Activated naive CD4-positive, alpha-beta T cell treated with anti-CD3 and anti-CD28 coated beads for 36 hours (primary cell): ENCODE measurements at regions of chr4 and their contacts with region 1.

Region 1: DNA sequence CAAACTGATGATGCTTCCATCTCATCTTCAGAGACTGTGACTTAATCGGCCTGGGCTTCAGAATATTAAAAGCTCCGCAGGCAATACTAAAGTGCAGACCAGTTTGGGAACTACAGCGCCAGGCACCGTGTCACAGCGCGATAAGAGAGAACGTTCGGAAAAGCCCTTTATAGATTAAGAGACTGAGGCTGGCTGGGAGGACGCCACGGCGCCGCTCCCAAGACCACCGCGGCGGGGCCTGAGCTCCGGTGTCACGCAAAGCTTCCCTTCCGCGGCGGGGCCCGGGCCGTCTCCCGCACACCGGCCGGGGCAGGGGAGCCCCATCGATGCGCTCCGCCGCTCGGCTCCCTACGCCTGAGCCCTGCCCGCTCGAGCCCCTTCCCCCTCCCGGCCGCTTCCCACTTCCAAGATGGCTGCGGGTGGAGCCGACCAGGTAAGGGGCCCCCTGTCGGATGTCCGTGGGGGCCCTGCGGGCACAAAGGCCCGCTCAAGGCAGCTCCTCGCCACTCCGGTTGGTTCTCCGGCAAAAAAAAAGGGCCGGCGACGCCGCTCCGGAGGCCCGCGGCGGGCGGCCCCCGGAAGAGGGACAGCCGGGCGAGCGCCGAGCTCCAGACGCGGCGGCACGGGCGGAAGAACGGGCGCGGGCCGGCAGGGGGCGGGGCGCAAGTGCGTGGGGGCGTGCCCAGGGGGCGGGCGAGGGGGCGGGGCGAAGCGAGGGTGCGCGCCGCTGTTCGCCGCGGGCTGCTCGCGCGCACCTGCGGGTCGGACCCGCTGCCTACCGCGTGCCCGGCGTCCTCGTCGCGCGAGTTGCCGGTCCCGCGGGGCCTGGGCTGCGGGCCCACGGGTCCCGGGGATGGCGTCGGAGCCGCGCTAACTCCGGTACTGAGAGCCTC is at the start of gene TBC1D14:
- DNase-seq: peak; percentile 88
- H3K4me3 Mint-ChIP-seq: peak within 1 kb of the TSS; percentile 92
- H3K27ac Mint-ChIP-seq: peak within 1 kb of the TSS; percentile 86
- H3K4me1 Mint-ChIP-seq: peaks cover 45% of the 10 kb centered on the region
- H3K27me3 Mint-ChIP-seq: peaks cover 3% of the 10 kb centered on the region
- total RNA-seq, gene TBC1D14: 23.6 to 24.6 TPM

Region 2: GRCh38 chr4:6898763-6899162 is 10.6 kb before region 1 on chr4:
- CTCF ChIA-PET with region 1: interaction called, 13 read pairs
- intact Hi-C with region 1: loop called (anchors 1 kb)
- DNase-seq: no peak
- H3K4me3 Mint-ChIP-seq: no peak overlapping the region
- H3K27ac Mint-ChIP-seq: peak overlapping the region; percentile 69
- H3K4me1 Mint-ChIP-seq: peaks cover 20% of the 10 kb centered on the region
- H3K27me3 Mint-ChIP-seq: no peaks in the 10 kb centered on the region

Region 3: DNA sequence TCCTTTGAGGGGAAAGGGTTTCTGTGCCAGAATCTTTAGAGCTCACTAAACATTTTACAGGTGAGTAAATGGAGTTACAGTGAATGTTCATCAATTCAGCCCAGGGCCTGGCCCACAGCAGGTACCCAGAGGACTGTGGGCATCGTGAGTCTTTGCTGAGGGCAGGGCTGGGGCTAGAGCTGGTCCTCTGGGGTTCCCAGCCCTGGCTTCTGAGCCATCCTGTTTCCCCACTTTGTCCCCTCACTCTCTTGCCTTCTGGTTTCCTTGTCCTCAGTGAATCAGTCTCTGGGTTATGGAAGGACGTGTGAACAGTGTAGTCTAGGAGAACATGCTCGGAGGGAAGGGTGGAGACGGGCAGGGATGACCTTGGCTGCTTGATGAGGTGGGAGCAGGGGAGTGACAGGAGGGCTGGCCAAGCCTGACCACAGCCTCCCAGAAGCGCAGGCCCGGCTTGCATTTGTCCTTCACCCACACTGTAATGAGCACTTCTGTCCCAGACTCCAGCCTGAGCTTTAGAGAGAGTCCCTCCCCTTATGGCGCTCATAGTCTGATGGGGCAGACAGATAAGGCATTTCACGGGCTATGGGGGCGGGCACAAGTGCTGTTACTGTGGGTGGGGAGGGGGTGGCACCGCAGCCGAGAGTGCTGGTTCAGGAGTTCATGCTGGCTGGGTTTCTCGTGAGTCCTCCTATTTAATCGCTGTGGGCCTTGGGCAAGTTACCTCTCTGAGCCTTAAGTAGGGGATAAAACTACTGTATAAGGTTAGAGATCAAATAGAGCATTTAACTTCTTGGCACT is 17.6 kb after region 1 on chr4:
- CTCF ChIA-PET with region 1: interaction called, 8 read pairs
- intact Hi-C with region 1: loop called (anchors 1 kb)
- DNase-seq: peak; percentile 74
- H3K4me3 Mint-ChIP-seq: peak overlapping the region; percentile 49
- H3K27ac Mint-ChIP-seq: peak overlapping the region; percentile 85
- H3K4me1 Mint-ChIP-seq: peaks cover 67% of the 10 kb centered on the region
- H3K27me3 Mint-ChIP-seq: no peaks in the 10 kb centered on the region